ENCODE measurements at regions of chr21 and their contacts with region 1.

Region 1: DNA sequence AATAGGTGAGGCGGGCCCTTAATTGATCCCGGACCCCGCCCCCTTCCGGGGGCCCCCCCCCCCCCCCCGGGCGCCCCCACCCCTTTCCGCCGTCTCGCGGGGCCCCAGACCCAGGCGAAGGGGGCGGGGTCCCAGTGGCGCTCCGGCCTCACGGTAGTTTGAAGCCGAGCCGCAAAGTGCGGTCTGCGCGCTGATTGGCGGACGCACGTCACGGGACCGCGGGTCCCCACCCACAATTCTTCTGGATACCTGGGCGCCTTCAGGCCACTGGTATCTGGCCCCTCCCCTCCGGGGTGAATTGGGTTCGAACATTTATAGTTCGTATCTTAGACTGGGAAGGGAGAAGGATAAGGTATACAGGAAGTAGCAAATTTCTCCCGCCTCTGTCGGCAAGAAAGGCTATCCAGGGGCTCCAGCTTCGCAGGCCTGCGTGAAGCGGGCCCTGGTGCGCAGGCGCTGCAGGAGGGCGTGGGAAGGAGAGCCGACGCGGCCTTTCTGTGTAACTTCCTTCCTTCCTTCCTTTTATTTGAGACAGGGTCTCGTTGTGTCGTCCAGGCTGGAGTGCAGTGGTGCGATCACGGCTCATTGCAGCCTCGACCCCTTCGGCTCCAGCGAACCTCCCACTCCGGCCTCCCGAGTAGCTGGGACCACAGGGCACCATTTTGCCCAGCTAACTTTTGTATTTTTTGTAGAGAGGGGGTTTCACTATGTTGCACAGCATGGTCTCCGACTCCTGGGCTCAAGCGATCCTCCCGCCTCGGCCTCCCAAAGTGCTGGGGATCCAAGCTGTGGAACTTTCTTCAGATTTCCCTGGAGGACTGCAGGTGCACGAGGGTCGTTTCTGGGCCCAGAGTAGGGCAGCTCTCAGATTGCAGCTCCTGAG is 564 bp upstream of the HMGN1 start:
- DNase-seq: peak; percentile 99 to 100 (median 100)
- ATAC-seq: peak; percentile 93
- H3K4me3 ChIP-seq: peak overlapping the region; percentile 68
- H3K27ac ChIP-seq: peak overlapping the region; percentile 94
- H3K4me1 ChIP-seq: peaks cover 5 to 30% of the 10 kb centered on the region in 2 experiments
- H3K27me3 ChIP-seq: no peaks in the 10 kb centered on the region
- CTCF ChIP-seq: no peak; a peak in 1 of 6 replicates
- EP300 ChIP-seq: no peak
- POLR2A ChIP-seq: peak; percentile 97
- RAD21 ChIP-seq: peak; percentile 13 to 19; a peak in 3 of 4 replicates

Region 2: GRCh38 chr21:39332175-39332574 is 17.3 kb before region 1 on chr21:
- CTCF ChIA-PET with region 1: no interaction called
- POLR2A ChIA-PET with region 1: interaction called, 39 read pairs
- in situ Hi-C with region 1: no loop called
- intact Hi-C with region 1: no loop called
- DNase-seq: no peak
- ATAC-seq: peak; percentile 69
- H3K4me3 ChIP-seq: no peak overlapping the region
- H3K27ac ChIP-seq: no peak overlapping the region
- H3K4me1 ChIP-seq: peaks cover 6 to 9% of the 10 kb centered on the region in 2 experiments; a peak in 4 of 5 replicates
- H3K27me3 ChIP-seq: no peaks in the 10 kb centered on the region
- CTCF ChIP-seq: no peak
- EP300 ChIP-seq: peak; percentile 23; the same call in 1 of the 2 replicates
- POLR2A ChIP-seq: no peak
- RAD21 ChIP-seq: 0 out of 4 replicates have a peak, but pooled peaks of 1 of the 2 experiments have one; percentile 2

Region 3: DNA sequence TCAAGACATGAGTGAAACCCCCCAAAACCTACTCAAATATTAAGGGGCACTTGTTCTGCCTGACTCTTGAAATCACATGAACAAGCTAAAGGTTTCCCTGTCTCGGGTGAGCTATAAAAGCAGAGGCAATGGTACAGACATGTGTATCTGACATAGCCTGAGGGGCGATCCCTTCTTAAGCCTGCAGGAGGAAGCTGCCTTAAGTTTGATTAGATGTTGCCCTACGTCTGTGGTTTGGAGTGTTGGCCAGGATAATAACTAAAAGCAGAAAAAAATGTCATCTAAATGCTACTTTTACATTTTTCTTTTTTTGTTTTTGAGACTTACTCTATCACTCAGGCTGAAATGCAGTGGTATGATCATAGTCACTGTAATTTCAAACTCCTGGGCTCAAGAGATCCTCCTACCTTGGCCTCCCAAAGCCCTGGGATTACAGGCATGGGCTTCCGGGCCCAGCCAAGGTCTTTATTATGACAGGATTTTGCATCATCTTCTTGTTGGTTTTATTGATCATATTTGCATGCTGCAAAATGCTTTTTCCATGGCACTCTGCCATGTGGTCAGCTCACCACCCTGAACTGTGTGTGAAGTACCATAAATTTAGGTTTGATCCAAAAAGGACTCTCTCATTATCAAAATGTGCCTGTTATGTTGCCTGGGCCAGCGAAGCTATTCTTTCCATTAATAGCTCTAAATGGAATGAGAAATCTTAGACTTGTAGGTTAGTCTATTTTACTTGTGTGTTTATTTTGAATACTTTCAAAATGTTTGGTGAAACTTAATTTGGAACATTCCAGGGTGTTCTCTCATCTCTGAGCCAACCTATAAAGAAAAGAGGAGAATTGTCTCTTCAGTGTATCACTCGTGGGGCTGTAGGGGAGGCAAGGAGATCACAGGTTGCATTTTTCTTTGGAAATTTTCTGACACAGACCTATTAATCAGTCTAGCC is 14.4 kb after region 1 on chr21:
- CTCF ChIA-PET with region 1: no interaction called
- POLR2A ChIA-PET with region 1: interaction called, 24 read pairs
- in situ Hi-C with region 1: no loop called
- intact Hi-C with region 1: no loop called
- DNase-seq: peak in 3 of 4 experiments; percentile 34 to 64 (median 44)
- ATAC-seq: peak; percentile 89
- H3K4me3 ChIP-seq: no peak overlapping the region
- H3K27ac ChIP-seq: peak overlapping the region; percentile 26; the same call in 2 of the 3 replicates
- H3K4me1 ChIP-seq: peaks cover 0 to 14% of the 10 kb centered on the region in 2 experiments; a peak in 3 of 5 replicates
- H3K27me3 ChIP-seq: no peaks in the 10 kb centered on the region
- CTCF ChIP-seq: peak in 2 of 3 experiments; percentile 31 to 37; a peak in 2 of 6 replicates
- EP300 ChIP-seq: no peak
- POLR2A ChIP-seq: no peak
- RAD21 ChIP-seq: no peak; a peak in 1 of 4 replicates

Region 4: DNA sequence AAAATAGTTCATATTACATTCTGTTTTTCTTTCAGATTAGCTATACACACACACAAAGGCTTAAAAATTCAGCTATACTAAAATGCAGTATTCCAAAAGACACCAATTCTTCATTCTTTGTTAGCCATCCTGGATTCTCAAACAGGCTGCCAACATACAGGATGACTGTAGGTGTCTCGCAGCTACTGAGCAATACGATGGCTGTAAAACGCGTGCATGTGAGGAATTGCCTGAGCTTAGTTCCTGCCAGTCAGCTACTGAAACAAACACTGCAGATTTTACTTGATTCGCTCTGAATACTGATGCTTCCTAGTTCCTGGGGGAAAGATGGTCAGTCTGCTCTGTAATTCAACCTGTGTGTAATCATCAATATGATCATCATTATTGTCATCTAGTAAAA is 24.2 kb after region 1 on chr21:
- CTCF ChIA-PET with region 1: no interaction called
- POLR2A ChIA-PET with region 1: interaction called, 21 read pairs
- in situ Hi-C with region 1: no loop called
- intact Hi-C with region 1: loop called (anchors 1 kb)
- DNase-seq: peak in 2 of 4 experiments; percentile 29 to 68
- ATAC-seq: peak; percentile 66
- H3K4me3 ChIP-seq: no peak overlapping the region
- H3K27ac ChIP-seq: no peak overlapping the region
- H3K4me1 ChIP-seq: peaks cover 18 to 28% of the 10 kb centered on the region in 2 experiments
- H3K27me3 ChIP-seq: no peaks in the 10 kb centered on the region
- CTCF ChIP-seq: peak; percentile 40 to 67 (median 67); a peak in 5 of 6 replicates
- EP300 ChIP-seq: no peak
- POLR2A ChIP-seq: no peak
- RAD21 ChIP-seq: peak; percentile 39 to 69; a peak in 3 of 4 replicates